ENCODE measurements at regions of chr4 and their contacts with region 1.

Region 1: GRCh38 chr4:119623025-119623424 is 5.6 kb downstream of the PDE5A start:
- DNase-seq: no peak
- ATAC-seq: no peak

Region 2: GRCh38 chr4:119570401-119570800 is 52.6 kb before region 1 on chr4:
- intact Hi-C with region 1: loop called in 1 of 2 experiments (anchors 5 kb)
- DNase-seq: no peak
- ATAC-seq: no peak

Measured in left colon (tissue), 2 donors.